ENCODE measurements at regions of chr2 and their contacts with region 1.

Region 1: GRCh38 chr2:149017116-149017985 is 21.1 kb upstream of the LYPD6B start:
- DNase-seq: peak; percentile 43 to 80 (median 70)
- ATAC-seq: peak; percentile 67
- H3K4me3 ChIP-seq: no peak overlapping the region
- H3K4me3 Mint-ChIP-seq: no peak overlapping the region
- H3K27ac ChIP-seq: no peak overlapping the region
- H3K27ac Mint-ChIP-seq: no peak overlapping the region
- H3K4me1 ChIP-seq: no peaks in the 10 kb centered on the region
- H3K4me1 Mint-ChIP-seq: no peaks in the 10 kb centered on the region
- H3K27me3 ChIP-seq: no peaks in the 10 kb centered on the region
- H3K27me3 Mint-ChIP-seq: peaks cover 3% of the 10 kb centered on the region
- CTCF ChIP-seq: peak; percentile 92

Region 2: GRCh38 chr2:148658807-148659722 is 358.3 kb before region 1 on chr2:
- CTCF ChIA-PET with region 1: no interaction called
- POLR2A ChIA-PET with region 1: no interaction called
- intact Hi-C with region 1: no loop called
- DNase-seq: peak in 2 of 9 experiments; percentile 58 to 75
- ATAC-seq: peak; percentile 81
- H3K4me3 ChIP-seq: no peak overlapping the region
- H3K4me3 Mint-ChIP-seq: peak overlapping the region; percentile 66
- H3K27ac ChIP-seq: peak overlapping the region in 1 of 2 experiments; percentile 56
- H3K27ac Mint-ChIP-seq: peak overlapping the region; percentile 85
- H3K4me1 ChIP-seq: peaks cover 68% of the 10 kb centered on the region
- H3K4me1 Mint-ChIP-seq: peaks cover 78% of the 10 kb centered on the region
- H3K27me3 ChIP-seq: no peaks in the 10 kb centered on the region
- H3K27me3 Mint-ChIP-seq: no peaks in the 10 kb centered on the region
- CTCF ChIP-seq: no peak

Region 3: DNA sequence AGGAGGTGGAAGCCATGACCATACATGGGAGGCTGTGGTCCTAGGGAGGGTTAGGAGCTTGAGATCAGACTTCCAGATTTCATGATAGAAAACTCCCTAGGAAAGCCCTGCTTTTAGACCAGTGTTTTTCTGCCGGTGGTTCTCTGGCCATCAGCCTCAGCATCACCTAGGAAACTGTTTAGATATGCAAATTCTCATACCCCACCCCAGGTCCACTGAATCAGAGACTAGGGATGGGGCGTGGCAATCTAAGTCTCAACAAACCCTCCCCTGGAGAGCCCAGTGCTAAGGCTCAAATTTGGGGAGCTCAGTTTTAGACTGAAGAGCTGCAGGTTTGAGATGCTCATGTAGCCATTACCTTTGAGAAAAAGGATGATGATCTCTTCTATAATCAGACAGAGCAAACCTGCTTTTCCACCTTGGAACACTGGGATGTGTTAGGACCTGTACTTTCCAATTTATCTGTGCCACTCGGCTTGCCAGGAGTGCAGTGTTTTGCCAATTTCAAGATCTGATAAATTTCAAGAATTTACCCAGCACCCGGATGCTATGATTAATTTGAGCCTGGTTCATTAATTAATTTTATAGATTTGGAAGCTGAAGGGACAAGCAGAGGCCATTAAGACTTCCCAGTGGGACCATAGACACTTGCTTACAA is 10.3 kb before region 1 on chr2:
- CTCF ChIA-PET with region 1: interaction called, 25 read pairs
- POLR2A ChIA-PET with region 1: interaction called, 5 read pairs
- intact Hi-C with region 1: no loop called
- DNase-seq: no peak
- ATAC-seq: no peak
- H3K4me3 ChIP-seq: no peak overlapping the region
- H3K4me3 Mint-ChIP-seq: no peak overlapping the region
- H3K27ac ChIP-seq: no peak overlapping the region
- H3K27ac Mint-ChIP-seq: no peak overlapping the region
- H3K4me1 ChIP-seq: no peaks in the 10 kb centered on the region
- H3K4me1 Mint-ChIP-seq: no peaks in the 10 kb centered on the region
- H3K27me3 ChIP-seq: no peaks in the 10 kb centered on the region
- H3K27me3 Mint-ChIP-seq: no peaks in the 10 kb centered on the region
- CTCF ChIP-seq: no peak

Region 4: GRCh38 chr2:149027590-149028218 is 10.4 kb after region 1 on chr2:
- CTCF ChIA-PET with region 1: interaction called, 38 read pairs
- POLR2A ChIA-PET with region 1: no interaction called
- intact Hi-C with region 1: no loop called
- DNase-seq: no peak
- ATAC-seq: no peak
- H3K4me3 ChIP-seq: no peak overlapping the region
- H3K4me3 Mint-ChIP-seq: no peak overlapping the region
- H3K27ac ChIP-seq: no peak overlapping the region
- H3K27ac Mint-ChIP-seq: no peak overlapping the region
- H3K4me1 ChIP-seq: no peaks in the 10 kb centered on the region
- H3K4me1 Mint-ChIP-seq: peaks cover 3% of the 10 kb centered on the region
- H3K27me3 ChIP-seq: no peaks in the 10 kb centered on the region
- H3K27me3 Mint-ChIP-seq: peaks cover 9% of the 10 kb centered on the region
- CTCF ChIP-seq: no peak

Region 5: GRCh38 chr2:149098701-149099100 is 81.3 kb after region 1 on chr2:
- CTCF ChIA-PET with region 1: no interaction called
- POLR2A ChIA-PET with region 1: no interaction called
- intact Hi-C with region 1: no loop called
- DNase-seq: no peak
- ATAC-seq: no peak
- H3K4me3 ChIP-seq: no peak overlapping the region
- H3K4me3 Mint-ChIP-seq: no peak overlapping the region
- H3K27ac ChIP-seq: no peak overlapping the region
- H3K27ac Mint-ChIP-seq: no peak overlapping the region
- H3K4me1 ChIP-seq: no peaks in the 10 kb centered on the region
- H3K4me1 Mint-ChIP-seq: no peaks in the 10 kb centered on the region
- H3K27me3 ChIP-seq: peaks cover 0 to 10% of the 10 kb centered on the region in 2 experiments
- H3K27me3 Mint-ChIP-seq: peaks cover 13% of the 10 kb centered on the region
- CTCF ChIP-seq: no peak

Region 6: DNA sequence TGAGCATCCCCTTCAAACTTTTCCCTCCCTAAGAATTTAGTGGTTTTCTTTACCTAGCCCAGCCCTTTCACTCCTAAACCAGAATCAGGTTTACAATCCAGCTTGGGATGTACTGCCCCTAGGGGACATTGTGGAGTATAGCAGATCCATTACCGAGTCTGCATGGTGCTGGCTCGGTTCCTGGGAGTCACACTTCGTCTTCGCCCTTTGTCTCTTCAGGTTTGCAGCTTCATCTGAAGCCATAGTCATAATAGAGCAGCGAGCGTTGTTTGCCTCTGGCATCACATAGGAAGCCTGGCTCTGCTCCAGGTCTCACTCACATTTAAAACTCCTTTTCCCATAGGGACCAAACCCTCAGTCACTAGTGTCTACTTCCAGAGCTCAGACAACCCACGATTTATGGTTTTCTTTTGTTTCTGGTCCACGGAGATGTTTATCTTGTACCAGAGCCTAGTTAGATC is 296.2 kb after region 1 on chr2:
- CTCF ChIA-PET with region 1: interaction called, 4 read pairs
- POLR2A ChIA-PET with region 1: no interaction called
- intact Hi-C with region 1: loop called in 1 of 2 experiments (anchors 5 kb)
- DNase-seq: peak in 2 of 9 experiments; percentile 15 to 23
- ATAC-seq: no peak
- H3K4me3 ChIP-seq: no peak overlapping the region
- H3K4me3 Mint-ChIP-seq: no peak overlapping the region
- H3K27ac ChIP-seq: no peak overlapping the region
- H3K27ac Mint-ChIP-seq: no peak overlapping the region
- H3K4me1 ChIP-seq: no peaks in the 10 kb centered on the region
- H3K4me1 Mint-ChIP-seq: peaks cover 4% of the 10 kb centered on the region
- H3K27me3 ChIP-seq: no peaks in the 10 kb centered on the region
- H3K27me3 Mint-ChIP-seq: peaks cover 18% of the 10 kb centered on the region
- CTCF ChIP-seq: peak; percentile 60

Region 7: GRCh38 chr2:149561309-149561926 is 544.1 kb after region 1 on chr2:
- CTCF ChIA-PET with region 1: interaction called, 54 read pairs
- POLR2A ChIA-PET with region 1: no interaction called
- intact Hi-C with region 1: loop called in 1 of 2 experiments (anchors 1 kb)
- DNase-seq: peak in 3 of 9 experiments; percentile 43 to 54 (median 50)
- ATAC-seq: peak; percentile 54
- H3K4me3 ChIP-seq: no peak overlapping the region
- H3K4me3 Mint-ChIP-seq: no peak overlapping the region
- H3K27ac ChIP-seq: no peak overlapping the region
- H3K27ac Mint-ChIP-seq: no peak overlapping the region
- H3K4me1 ChIP-seq: no peaks in the 10 kb centered on the region
- H3K4me1 Mint-ChIP-seq: peaks cover 4% of the 10 kb centered on the region
- H3K27me3 ChIP-seq: no peaks in the 10 kb centered on the region
- H3K27me3 Mint-ChIP-seq: peaks cover 2% of the 10 kb centered on the region
- CTCF ChIP-seq: peak; percentile 99

Region 8: GRCh38 chr2:149573760-149574159 is 556.4 kb after region 1 on chr2:
- CTCF ChIA-PET with region 1: interaction called, 10 read pairs
- POLR2A ChIA-PET with region 1: no interaction called
- intact Hi-C with region 1: no loop called
- DNase-seq: no peak
- ATAC-seq: no peak
- H3K4me3 ChIP-seq: no peak overlapping the region
- H3K4me3 Mint-ChIP-seq: no peak overlapping the region
- H3K27ac ChIP-seq: no peak overlapping the region
- H3K27ac Mint-ChIP-seq: no peak overlapping the region
- H3K4me1 ChIP-seq: no peaks in the 10 kb centered on the region
- H3K4me1 Mint-ChIP-seq: peaks cover 28% of the 10 kb centered on the region
- H3K27me3 ChIP-seq: no peaks in the 10 kb centered on the region
- H3K27me3 Mint-ChIP-seq: no peaks in the 10 kb centered on the region
- CTCF ChIP-seq: no peak